Prostate gland (tissue), 2 donors: ENCODE measurements at regions of chr4 and their contacts with region 1.

Region 1: DNA sequence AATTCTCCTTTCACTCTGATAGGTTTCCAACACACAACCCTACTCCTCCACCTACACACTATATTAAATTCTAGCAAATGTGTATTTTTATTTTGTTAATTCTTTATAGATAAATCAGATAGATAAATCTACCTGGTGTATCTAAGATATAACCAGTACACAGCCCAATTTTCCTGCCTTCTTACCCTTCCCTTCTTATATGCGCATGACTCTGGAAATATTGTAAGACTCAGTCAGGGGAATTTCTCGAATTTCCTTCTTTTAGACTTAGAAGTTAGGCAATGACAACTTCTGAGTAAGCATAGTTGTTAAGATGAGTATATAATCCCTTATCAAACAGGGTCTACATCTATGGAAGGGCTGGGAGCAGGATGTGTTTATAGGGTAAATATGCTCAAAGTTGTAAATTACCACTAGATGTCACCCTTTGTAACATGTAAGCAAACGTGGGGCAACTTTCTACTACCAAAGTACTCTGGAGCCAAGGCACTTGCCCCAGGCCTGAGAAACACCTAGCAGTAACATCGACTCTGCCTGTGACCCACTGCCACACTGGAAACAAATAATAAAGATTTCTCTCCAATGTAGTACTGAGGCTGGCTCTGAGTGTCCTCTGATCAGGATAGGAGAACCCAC is 444.7 kb downstream of the IQCM start:
- DNase-seq: no peak
- H3K4me3 ChIP-seq: no peak overlapping the region
- H3K27ac ChIP-seq: no peak overlapping the region
- H3K4me1 ChIP-seq: no peaks in the 10 kb centered on the region
- H3K27me3 ChIP-seq: no peaks in the 10 kb centered on the region
- CTCF ChIP-seq: peak in 1 of 4 experiments; percentile 15
- POLR2A ChIP-seq: no peak

Region 2: DNA sequence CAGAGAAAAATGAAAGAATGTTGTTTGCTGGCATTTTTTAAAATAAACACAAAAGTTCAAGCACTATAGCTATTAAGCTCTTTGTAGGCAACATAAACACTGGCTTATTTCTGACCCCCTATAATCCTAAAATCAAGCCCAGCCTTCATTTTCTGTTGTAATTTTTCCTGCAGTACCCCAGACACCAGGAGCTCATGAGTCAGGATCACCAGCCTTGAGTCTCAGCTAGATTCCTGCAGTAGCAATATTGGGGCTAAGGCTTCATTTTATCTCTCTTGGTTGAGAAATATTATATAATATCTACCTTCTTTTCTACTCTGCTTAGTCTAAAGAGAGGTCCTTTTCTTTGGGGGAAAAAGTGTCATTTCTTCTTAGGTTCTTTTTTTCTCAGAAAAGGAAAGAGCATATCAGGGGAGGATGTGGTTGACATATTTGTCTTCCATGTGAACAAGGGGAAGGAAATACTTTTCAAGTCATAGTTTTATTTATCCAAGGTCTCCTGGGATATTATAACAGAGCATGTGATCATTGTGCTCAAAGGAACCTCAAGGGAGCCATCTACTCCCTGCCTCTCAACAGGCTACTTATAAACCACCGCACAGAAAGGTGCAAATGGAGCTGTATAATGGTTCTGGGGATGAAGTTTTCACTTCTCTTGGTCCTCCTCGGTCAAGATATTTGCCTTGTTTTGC is 250.4 kb before region 1 on chr4:
- intact Hi-C with region 1: no loop called
- DNase-seq: no peak
- H3K4me3 ChIP-seq: no peak overlapping the region
- H3K27ac ChIP-seq: no peak overlapping the region
- H3K4me1 ChIP-seq: no peaks in the 10 kb centered on the region
- H3K27me3 ChIP-seq: no peaks in the 10 kb centered on the region
- CTCF ChIP-seq: no peak
- POLR2A ChIP-seq: no peak

Region 3: DNA sequence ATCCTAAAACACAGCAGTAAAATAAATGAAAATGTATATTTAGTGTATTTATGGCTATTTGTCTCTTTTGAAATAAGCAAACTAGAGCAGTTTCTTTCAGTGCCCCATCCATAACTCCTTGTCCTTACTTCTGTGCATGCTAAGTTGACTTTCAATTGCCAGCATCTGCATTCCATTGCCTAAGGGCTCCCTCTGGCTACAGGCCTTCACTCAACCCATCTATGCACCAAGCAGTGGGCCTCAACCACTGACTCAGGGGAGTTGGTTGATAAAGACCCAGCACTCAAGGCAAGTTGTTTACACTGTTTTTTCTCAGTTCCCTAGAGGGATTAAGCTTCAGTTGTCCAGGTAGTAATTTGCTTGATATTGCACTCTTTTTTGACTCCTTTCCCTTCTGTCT is 179.0 kb after region 1 on chr4:
- intact Hi-C with region 1: loop called (anchors 10 kb)
- DNase-seq: no peak
- H3K4me3 ChIP-seq: no peak overlapping the region
- H3K27ac ChIP-seq: no peak overlapping the region
- H3K4me1 ChIP-seq: no peaks in the 10 kb centered on the region
- H3K27me3 ChIP-seq: no peaks in the 10 kb centered on the region
- CTCF ChIP-seq: no peak
- POLR2A ChIP-seq: no peak

Region 4: GRCh38 chr4:149897783-149898182 is 526.9 kb after region 1 on chr4:
- intact Hi-C with region 1: loop called (anchors 5 kb)
- DNase-seq: no peak
- H3K4me3 ChIP-seq: no peak overlapping the region
- H3K27ac ChIP-seq: no peak overlapping the region
- H3K4me1 ChIP-seq: no peaks in the 10 kb centered on the region
- H3K27me3 ChIP-seq: no peaks in the 10 kb centered on the region
- CTCF ChIP-seq: peak in 2 of 4 experiments; percentile 12 to 14
- POLR2A ChIP-seq: no peak